A673 (cell line): ENCODE measurements at regions of chr10 and their contacts with region 1.

Region 1: GRCh38 chr10:28432210-28432676 is 100.7 kb upstream of the WAC start:
- DNase-seq: peak; percentile 79
- H3K4me3 ChIP-seq: no peak overlapping the region
- H3K27ac ChIP-seq: no peak overlapping the region
- H3K4me1 ChIP-seq: no peaks in the 10 kb centered on the region
- H3K27me3 ChIP-seq: no peaks in the 10 kb centered on the region
- CTCF ChIP-seq: peak; percentile 85

Region 2: GRCh38 chr10:28619455-28619854 is 187.2 kb after region 1 on chr10:
- CTCF ChIA-PET with region 1: no interaction called
- POLR2A ChIA-PET with region 1: no interaction called
- intact Hi-C with region 1: loop called (anchors 5 kb)
- DNase-seq: no peak
- H3K4me3 ChIP-seq: no peak overlapping the region
- H3K27ac ChIP-seq: no peak overlapping the region
- H3K4me1 ChIP-seq: peaks cover 21% of the 10 kb centered on the region
- H3K27me3 ChIP-seq: no peaks in the 10 kb centered on the region
- CTCF ChIP-seq: no peak

Region 3: DNA sequence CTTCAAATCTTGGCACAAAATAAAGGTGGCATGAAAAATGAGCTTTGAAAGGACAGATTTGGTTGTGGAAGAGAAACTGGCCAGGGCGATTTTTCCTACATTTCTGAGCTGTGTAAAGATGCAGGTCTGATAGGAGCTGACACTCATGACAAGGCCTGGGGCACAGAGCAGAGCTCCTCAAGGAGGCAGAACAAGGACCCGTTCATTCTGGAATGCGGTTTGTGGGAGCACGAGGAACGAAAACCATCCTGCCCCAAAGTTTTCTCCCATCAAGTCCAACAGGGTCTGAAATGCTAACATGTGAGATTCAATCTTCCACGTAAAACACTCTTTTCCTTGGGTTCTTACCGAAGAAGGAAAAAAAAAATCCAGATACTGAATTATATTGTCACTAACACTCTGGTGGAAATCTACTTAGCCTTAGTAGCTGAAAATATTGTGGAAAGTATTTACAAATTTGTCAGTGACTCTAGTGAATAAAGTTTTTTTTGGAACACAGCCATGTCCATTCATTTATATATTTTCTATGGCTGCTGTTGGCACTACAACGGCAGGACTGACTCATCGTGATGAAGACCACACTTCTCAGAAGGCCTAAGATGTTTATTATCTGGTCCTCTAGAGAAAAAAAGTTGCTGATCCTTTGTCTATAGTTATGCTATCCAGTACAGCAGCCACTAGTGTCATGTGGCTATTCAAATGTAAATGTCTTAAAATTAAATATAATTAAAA is 460.7 kb after region 1 on chr10:
- CTCF ChIA-PET with region 1: no interaction called
- POLR2A ChIA-PET with region 1: no interaction called
- intact Hi-C with region 1: no loop called
- DNase-seq: no peak
- H3K4me3 ChIP-seq: no peak overlapping the region
- H3K27ac ChIP-seq: no peak overlapping the region
- H3K4me1 ChIP-seq: no peaks in the 10 kb centered on the region
- H3K27me3 ChIP-seq: no peaks in the 10 kb centered on the region
- CTCF ChIP-seq: no peak